ENCODE measurements at regions of chr18 and their contacts with region 1.

Region 1: DNA sequence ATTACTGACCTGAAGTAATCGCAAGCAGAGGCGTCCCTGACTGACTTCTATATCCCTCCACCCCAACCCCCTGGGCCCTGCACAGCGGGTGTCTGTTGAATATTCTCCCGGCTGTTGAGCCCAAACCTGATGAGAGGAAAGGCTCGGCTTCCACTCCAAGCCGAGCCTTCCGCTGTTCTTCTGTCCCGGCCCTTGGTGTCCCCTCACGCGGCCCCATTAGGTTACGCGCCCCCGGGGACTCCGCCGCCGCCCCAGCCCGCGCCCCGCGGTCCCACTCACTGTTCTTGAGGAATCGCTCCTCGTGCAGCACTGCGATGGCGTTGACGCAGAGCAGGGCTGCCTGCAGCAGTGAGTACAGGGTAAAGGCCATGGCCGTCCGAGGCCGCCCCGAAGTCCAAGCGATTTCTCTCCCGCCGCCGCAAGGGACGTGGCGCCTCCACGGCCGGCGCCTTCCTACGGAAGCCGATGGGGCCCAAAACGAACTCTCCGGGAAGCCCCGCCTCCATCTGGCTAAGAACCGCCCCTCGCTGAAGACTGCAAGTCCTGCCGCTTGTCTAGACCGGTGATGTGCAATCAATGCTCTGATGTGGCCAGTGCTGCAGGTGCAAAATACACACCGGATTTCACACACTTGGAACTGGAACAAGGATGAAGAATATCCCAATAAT is at the start of gene IER3IP1:
- DNase-seq: peak; percentile 95
- H3K4me3 Mint-ChIP-seq: no peak within 1 kb of the TSS
- H3K27ac Mint-ChIP-seq: no peak within 1 kb of the TSS
- H3K4me1 Mint-ChIP-seq: no peaks in the 10 kb centered on the region
- H3K27me3 Mint-ChIP-seq: peaks cover 4% of the 10 kb centered on the region
- CTCF ChIP-seq: no peak
- total RNA-seq, gene IER3IP1: 18.1 and 20.4 TPM in 2 replicates

Region 2: DNA sequence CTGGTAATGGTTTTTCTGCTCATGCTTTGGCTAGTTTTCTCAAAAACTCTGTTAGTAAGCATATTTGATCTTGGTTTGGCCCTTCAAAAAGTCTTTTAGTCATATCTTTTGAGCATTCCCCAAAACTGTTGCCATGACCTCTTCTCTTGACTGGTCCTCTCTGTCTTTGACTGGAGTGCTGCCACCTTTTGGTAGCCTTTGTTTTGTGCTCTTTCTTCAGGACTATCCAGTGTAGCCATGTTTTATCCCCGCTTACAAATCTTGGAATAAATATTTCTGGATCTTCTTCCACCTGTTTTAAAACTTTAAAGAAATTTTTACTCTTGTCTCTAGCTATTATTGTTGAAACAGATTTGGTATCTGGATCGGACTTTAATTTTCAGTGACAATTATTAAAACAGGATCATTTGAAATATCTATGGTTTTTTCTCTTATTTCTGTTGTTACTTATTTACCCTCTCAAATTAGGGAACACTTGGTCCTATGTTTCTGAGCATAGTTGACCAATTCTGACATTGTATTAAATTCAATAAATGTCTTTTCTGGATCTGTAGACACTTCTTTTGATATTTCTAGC is 139.7 kb before region 1 on chr18:
- CTCF ChIA-PET with region 1: no interaction called
- intact Hi-C with region 1: no loop called
- DNase-seq: peak; percentile 32
- H3K4me3 Mint-ChIP-seq: no peak overlapping the region
- H3K27ac Mint-ChIP-seq: no peak overlapping the region
- H3K4me1 Mint-ChIP-seq: no peaks in the 10 kb centered on the region
- H3K27me3 Mint-ChIP-seq: peaks cover 10% of the 10 kb centered on the region
- CTCF ChIP-seq: peak; percentile 17

Region 3: GRCh38 chr18:47149457-47150028 is 26.5 kb before region 1 on chr18:
- CTCF ChIA-PET with region 1: no interaction called
- intact Hi-C with region 1: loop called (anchors 2 kb)
- DNase-seq: peak; percentile 19
- H3K4me3 Mint-ChIP-seq: peak overlapping the region; percentile 93
- H3K27ac Mint-ChIP-seq: peak overlapping the region; percentile 91
- H3K4me1 Mint-ChIP-seq: peaks cover 31% of the 10 kb centered on the region
- H3K27me3 Mint-ChIP-seq: no peaks in the 10 kb centered on the region
- CTCF ChIP-seq: no peak